ENCODE measurements at regions of chr3 and their contacts with region 1.

Region 1: GRCh38 chr3:147383617-147384016 is 22.7 kb downstream of the ZIC4 start:
- DNase-seq: peak; percentile 18
- ATAC-seq: 0 out of 2 replicates have a peak, but pooled peaks have one; percentile 37
- H3K4me3 ChIP-seq: no peak overlapping the region
- H3K27ac ChIP-seq: no peak overlapping the region
- H3K4me1 ChIP-seq: no peaks in the 10 kb centered on the region
- H3K27me3 ChIP-seq: peaks cover 99% of the 10 kb centered on the region
- CTCF ChIP-seq: peak; percentile 60

Region 2: DNA sequence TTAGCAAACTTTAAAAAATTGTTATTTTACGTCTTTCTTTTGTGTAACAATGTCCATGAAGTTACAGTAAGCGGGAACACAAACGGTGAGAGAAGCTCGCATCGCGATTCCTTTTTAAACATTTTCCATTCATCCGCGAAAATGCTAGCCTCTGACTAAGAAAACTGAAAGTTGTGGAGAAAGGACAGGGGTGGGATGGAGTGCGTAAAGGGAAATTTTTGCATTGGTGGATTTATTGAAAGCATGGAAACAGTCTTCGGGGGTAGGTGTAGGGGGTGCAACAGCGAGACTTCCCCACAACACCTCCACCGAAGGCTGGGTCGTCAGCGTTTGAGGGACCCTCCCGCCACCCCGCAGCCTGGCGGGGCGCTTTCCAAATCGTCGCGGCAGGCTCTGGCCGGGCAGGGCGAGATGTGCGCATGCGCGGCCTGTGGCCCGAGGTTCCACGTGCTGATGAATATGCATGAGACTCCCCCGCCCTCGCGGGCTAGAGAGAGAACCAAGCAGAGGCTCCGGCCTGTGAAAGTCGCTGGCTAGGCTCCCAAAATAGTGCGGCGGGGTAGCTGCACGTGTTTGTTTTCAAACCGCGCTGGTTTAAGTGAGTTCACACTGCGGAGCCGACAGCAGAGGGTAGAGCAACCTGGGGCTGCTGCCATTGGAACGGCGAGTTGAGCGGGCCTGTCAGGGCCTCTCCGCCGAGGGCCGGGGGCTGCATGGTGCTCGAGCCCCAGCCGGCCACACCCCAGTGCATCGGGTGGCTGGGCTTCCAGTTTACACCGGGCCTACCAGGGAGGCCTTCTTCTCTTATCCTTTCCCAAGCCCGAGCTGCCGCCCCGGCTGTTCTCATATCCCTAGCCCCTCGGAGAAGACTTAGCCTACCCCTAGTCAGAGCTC is 35.4 kb after region 1 on chr3:
- CTCF ChIA-PET with region 1: no interaction called
- POLR2A ChIA-PET with region 1: interaction called, 10 read pairs
- intact Hi-C with region 1: no loop called
- DNase-seq: no peak
- ATAC-seq: no peak
- H3K4me3 ChIP-seq: no peak overlapping the region
- H3K27ac ChIP-seq: no peak overlapping the region
- H3K4me1 ChIP-seq: no peaks in the 10 kb centered on the region
- H3K27me3 ChIP-seq: peaks cover 95% of the 10 kb centered on the region
- CTCF ChIP-seq: no peak

Region 3: GRCh38 chr3:147589016-147589415 is 205.4 kb after region 1 on chr3:
- CTCF ChIA-PET with region 1: no interaction called
- POLR2A ChIA-PET with region 1: no interaction called
- intact Hi-C with region 1: no loop called
- DNase-seq: no peak
- ATAC-seq: no peak
- H3K4me3 ChIP-seq: no peak overlapping the region
- H3K27ac ChIP-seq: no peak overlapping the region
- H3K4me1 ChIP-seq: no peaks in the 10 kb centered on the region
- H3K27me3 ChIP-seq: no peaks in the 10 kb centered on the region
- CTCF ChIP-seq: no peak

Region 4: DNA sequence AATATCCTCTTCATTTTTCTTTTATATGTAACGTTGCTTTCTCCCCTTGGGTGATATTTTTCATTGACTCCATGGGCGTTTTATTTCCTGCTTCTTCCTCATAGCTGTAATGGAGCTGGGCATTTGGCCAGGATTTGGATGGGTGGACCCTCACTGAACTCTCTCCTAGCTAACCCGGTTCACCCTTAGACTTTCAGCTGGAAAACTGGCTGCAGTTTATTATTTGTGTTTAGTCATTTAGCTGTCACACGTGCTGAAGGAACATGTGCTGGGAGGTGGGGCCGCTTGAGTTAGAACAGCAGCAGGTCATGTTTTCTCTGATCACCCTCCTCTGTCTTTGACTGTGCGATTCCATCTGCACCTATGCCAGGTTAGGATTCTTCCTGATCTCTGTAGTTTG is 433.2 kb after region 1 on chr3:
- CTCF ChIA-PET with region 1: no interaction called
- POLR2A ChIA-PET with region 1: no interaction called
- intact Hi-C with region 1: no loop called
- DNase-seq: peak; percentile 43
- ATAC-seq: no peak
- H3K4me3 ChIP-seq: no peak overlapping the region
- H3K27ac ChIP-seq: no peak overlapping the region
- H3K4me1 ChIP-seq: no peaks in the 10 kb centered on the region
- H3K27me3 ChIP-seq: no peaks in the 10 kb centered on the region
- CTCF ChIP-seq: no peak